Gastrocnemius medialis (tissue), 4 donors: ENCODE measurements at regions of chr3 and their contacts with region 1.

Region 1: DNA sequence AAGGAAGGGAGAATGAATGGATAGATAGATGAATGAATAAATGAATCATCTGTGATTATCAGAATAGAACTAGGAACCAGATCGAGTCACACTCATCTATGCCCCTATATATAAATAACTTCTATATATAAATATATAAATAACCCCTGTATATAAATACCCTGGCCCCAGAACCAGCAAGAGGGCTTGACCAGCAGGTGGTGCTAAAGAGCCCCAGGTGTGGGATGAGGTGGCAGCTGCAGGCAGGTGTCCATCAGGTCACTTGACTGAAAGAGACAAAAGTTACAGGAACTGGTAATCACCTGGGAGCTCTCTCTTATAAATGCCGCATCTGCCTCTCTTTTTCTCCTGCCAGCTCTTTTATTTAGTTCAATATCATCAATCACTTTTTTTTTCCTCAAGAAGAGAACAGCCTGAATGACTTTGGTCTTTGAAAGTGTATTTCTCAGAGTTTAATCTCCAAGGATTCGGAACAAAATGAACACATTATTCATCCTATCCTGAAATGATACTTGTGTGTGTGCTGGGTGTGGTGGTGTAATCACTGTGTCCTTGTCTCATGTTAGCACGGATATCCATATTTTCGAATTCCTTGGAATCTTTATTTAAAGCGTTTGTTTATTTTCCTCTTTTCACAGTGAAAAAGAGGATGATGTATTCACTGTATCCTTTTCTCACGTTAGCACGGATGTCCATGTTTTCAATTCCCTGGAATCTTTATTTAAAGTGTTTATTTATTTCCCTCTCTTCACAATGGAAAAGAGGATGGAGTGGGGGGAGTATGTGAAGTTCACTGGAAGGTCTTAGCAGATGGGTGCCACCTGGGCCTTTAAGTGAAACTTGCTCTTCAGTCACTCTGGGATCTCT is 35.4 kb upstream of the ATG7 start:
- DNase-seq: peak in 1 of 2 donors; percentile 48
- ATAC-seq: peak in 1 of 2 donors; percentile 60
- H3K4me3 ChIP-seq: no peak overlapping the region
- H3K27ac ChIP-seq: no peak overlapping the region
- H3K4me1 ChIP-seq: no peaks in the 10 kb centered on the region
- H3K27me3 ChIP-seq: peaks cover 0 to 3% (median 0%) of the 10 kb centered on the region in 3 donors
- CTCF ChIP-seq: peak; percentile 22 to 83 (median 62)
- POLR2A ChIP-seq: no peak

Region 2: DNA sequence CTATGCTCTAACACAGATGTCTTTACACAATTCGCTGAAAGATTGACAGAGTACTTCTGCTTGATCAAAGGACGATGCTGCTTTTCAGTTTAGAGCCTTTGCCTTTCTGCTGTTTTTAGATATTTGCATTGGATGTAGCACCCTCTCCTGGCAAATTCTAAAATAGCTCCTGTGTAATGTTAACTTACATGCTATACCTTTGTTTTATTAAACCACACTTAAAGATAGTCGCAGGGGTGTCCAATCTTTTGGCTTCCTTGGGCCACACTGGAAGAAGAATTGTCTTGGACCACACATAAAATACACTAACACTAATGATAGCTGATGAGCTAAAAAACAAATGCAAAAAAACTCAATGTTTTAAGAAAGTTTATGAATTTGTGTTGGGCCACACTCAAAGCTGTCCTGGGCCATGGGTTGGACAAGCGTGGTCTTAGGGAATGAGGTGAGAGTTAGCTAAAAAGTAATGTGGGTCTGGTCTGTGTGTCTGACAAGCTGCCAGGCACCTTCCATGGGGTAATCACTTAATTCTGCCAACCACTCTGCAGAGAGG is 98.3 kb after region 1 on chr3:
- in situ Hi-C with region 1: loop called (anchors 10 to 25 kb)
- intact Hi-C with region 1: loop called (anchors 1 kb)
- DNase-seq: no peak
- ATAC-seq: peak; percentile 47 to 77
- H3K4me3 ChIP-seq: no peak overlapping the region
- H3K27ac ChIP-seq: no peak overlapping the region
- H3K4me1 ChIP-seq: no peaks in the 10 kb centered on the region
- H3K27me3 ChIP-seq: no peaks in the 10 kb centered on the region
- CTCF ChIP-seq: peak; percentile 38 to 66 (median 56)
- POLR2A ChIP-seq: no peak